ENCODE measurements at regions of chr18 and their contacts with region 1.

Region 1: GRCh38 chr18:24031916-24032315 is 17.4 kb downstream of the TTC39C start:
- DNase-seq: no peak
- ATAC-seq: peak; percentile 85
- H3K4me3 Mint-ChIP-seq: no peak overlapping the region
- H3K27ac Mint-ChIP-seq: no peak overlapping the region
- H3K4me1 Mint-ChIP-seq: peaks cover 47% of the 10 kb centered on the region
- H3K27me3 Mint-ChIP-seq: no peaks in the 10 kb centered on the region
- CTCF ChIP-seq: no peak

Region 2: DNA sequence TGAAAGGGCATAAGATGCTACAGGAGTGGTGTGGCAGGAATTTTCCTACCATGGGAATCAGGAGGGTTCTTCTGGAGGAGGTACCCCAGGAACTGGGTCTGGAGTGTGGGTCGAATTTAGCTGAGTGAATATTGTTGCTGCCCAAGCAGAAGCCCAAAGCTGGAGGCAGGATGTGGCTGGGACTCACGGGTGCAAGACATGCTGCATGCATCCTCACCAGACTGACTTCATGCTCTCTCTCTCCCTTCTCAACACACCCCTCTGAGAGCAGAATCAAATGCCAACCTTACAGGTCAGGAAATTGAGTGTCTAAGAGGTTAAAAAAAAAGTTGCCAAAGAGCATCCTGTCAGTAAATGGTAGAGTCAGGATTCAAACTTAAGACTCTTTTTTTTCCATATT is 96.1 kb before region 1 on chr18:
- CTCF ChIA-PET with region 1: no interaction called
- POLR2A ChIA-PET with region 1: no interaction called
- intact Hi-C with region 1: no loop called
- DNase-seq: no peak
- ATAC-seq: no peak
- H3K4me3 Mint-ChIP-seq: no peak overlapping the region
- H3K27ac Mint-ChIP-seq: no peak overlapping the region
- H3K4me1 Mint-ChIP-seq: peaks cover 32% of the 10 kb centered on the region
- H3K27me3 Mint-ChIP-seq: no peaks in the 10 kb centered on the region
- CTCF ChIP-seq: no peak

Region 3: DNA sequence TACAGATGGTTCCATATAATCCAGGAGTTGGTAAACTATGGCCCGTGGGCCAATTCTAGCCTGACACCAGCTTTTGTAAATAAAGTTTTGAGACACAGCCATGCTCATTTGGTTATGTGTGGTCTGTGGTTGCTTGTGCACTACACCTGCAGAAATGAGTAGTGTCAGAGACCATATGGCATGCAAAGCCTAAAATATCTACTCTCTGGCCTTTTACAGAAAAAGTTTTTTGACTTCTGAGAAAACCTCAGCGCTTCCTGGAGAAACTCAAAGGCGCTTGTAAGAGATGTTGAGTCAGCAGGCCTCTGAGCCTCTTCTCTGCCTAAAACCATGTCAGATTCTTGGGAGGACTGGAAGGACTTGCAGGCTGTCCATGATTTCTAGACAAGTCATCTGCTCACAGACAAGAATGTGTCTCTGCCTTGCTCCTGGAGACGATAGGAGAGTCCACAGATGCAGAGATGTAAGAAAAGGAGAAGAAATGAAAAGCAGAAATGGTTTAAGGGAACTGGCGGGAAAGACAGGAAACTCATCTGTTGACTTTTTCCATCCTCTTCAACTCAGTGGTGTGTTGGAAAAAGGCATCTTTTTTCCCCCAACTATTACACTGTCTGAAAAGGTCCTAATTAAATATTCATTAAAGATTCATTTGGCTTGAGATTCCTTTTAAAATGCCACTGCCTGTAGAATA is 12.1 kb before region 1 on chr18:
- CTCF ChIA-PET with region 1: no interaction called
- POLR2A ChIA-PET with region 1: no interaction called
- intact Hi-C with region 1: loop called (anchors 2 kb)
- DNase-seq: no peak
- ATAC-seq: peak; percentile 72
- H3K4me3 Mint-ChIP-seq: peak overlapping the region; percentile 79
- H3K27ac Mint-ChIP-seq: peak overlapping the region; percentile 93
- H3K4me1 Mint-ChIP-seq: peaks cover 85% of the 10 kb centered on the region
- H3K27me3 Mint-ChIP-seq: no peaks in the 10 kb centered on the region
- CTCF ChIP-seq: no peak

Region 4: DNA sequence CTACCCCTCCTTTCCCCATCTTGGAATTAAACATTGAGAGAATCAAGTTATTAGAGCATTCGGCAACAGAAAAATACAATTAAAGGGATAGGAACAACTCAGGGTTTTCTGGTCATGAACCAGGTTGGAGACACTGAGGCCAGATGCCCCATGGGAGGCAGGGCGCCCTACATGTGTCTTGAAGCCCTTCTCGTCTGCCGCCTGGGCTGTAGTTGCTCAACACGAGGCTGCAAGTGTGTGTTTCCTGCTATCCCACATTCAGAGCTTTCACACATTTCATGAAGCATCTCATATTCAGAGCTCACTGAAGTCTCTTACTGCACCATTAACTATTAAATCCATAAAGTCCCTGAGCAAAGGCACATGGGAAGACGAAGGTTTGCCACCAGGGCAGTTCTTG is 11.5 kb after region 1 on chr18:
- CTCF ChIA-PET with region 1: no interaction called
- POLR2A ChIA-PET with region 1: no interaction called
- intact Hi-C with region 1: no loop called
- DNase-seq: no peak
- ATAC-seq: no peak
- H3K4me3 Mint-ChIP-seq: no peak overlapping the region
- H3K27ac Mint-ChIP-seq: no peak overlapping the region
- H3K4me1 Mint-ChIP-seq: peaks cover 36% of the 10 kb centered on the region
- H3K27me3 Mint-ChIP-seq: no peaks in the 10 kb centered on the region
- CTCF ChIP-seq: no peak

Measured in activated B cell treated with CpG ODN at 0.5 μM for 24 hours (primary cell).